ENCODE measurements at regions of chr3 and their contacts with region 1.

Region 1: DNA sequence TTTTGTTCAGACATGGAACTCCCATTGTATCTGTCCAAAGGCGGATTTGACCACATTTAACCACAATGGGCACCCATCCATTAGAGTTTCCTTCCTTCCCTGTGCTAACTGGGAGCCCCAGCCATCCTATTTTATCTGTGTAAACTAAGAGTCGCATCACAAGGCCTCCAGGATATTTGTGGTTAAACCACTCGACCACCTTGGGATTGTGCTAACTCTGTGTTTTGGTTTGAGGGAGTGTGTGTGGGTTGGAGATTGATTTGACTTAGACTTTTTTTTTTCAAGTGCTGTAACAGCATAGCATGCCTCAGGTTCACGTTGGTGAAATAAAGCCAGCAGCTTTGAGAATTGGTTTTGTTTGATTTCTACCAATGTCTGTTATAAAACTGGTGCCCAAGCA is 100.4 kb upstream of the TP63 start:
- DNase-seq: no peak
- H3K4me3 Mint-ChIP-seq: peak overlapping the region; percentile 41
- H3K27ac Mint-ChIP-seq: peak overlapping the region; percentile 87
- H3K4me1 Mint-ChIP-seq: peaks cover 33% of the 10 kb centered on the region
- H3K27me3 Mint-ChIP-seq: no peaks in the 10 kb centered on the region

Region 2: DNA sequence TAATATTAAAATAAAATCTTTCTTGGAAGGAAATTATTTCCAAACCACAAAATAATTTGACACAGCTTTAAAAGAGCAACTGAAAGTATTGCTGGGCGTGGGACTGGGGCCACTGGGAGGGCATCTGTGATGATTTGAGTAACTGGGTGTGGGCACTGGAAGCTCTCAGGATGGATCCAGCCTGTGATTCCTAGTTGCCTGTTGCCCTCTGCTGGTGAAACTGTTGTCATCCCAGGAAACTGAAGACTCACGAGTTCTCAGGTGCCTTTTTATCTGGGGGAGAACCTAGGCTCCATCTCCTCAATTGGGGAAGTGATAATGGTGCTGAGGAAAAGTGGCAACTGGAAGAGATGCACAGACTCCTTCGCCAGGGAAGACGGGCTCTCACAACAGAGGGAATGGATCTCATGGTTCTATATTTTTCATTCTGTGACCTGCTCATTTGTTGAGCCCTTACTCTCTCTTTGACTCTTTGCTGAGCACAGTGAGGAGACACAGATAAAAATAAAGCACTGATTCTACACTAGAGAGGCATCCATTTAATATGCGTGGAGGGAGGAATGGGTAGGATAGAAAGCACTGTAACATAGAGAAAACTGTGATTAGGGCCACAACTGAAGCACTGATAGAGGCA is 297.5 kb before region 1 on chr3:
- intact Hi-C with region 1: loop called (anchors 1 kb)
- DNase-seq: no peak
- H3K4me3 Mint-ChIP-seq: no peak overlapping the region
- H3K27ac Mint-ChIP-seq: no peak overlapping the region
- H3K4me1 Mint-ChIP-seq: peaks cover 48% of the 10 kb centered on the region
- H3K27me3 Mint-ChIP-seq: peaks cover 18% of the 10 kb centered on the region

Region 3: GRCh38 chr3:189404797-189405484 is 125.9 kb before region 1 on chr3:
- intact Hi-C with region 1: loop called (anchors 1 kb)
- DNase-seq: no peak
- H3K4me3 Mint-ChIP-seq: no peak overlapping the region
- H3K27ac Mint-ChIP-seq: no peak overlapping the region
- H3K4me1 Mint-ChIP-seq: peaks cover 11% of the 10 kb centered on the region
- H3K27me3 Mint-ChIP-seq: no peaks in the 10 kb centered on the region

Region 4: DNA sequence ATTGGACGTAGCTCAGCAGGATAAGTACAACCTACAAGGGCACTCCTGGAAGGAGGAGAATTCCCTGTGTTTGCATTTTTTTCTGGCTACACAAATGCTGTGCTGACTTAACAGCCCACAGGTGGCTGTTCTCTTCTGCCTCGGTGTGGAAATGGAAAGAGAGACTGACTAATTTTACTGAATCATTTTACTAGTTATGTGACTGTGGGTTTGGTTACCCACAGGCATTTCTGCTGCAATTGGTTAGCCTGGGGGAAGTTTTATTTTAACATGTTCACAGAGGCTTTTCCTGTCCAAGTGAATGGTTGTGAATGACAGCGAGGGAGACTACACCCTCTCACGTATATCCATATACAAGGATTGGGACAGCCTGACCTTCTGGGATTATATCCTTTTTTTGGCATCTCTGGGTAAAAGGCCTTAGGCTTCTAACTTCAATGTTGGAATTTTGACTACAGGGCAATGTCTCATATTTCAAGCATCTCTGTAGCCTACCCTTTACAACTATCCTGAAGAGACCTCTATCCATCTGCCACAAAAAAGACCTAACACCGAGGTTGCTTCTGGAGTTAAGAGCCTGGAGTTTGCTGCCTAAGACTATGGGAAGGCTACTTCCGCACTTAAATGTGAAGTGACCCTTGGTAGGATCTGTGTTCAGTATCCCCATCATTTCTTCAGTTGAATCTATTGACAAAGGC is 33.2 kb after region 1 on chr3:
- intact Hi-C with region 1: loop called (anchors 1 kb)
- DNase-seq: peak; percentile 54
- H3K4me3 Mint-ChIP-seq: peak overlapping the region; percentile 0
- H3K27ac Mint-ChIP-seq: peak overlapping the region; percentile 19
- H3K4me1 Mint-ChIP-seq: peaks cover 55% of the 10 kb centered on the region
- H3K27me3 Mint-ChIP-seq: no peaks in the 10 kb centered on the region

Region 5: GRCh38 chr3:189621948-189622603 is 91.3 kb after region 1 on chr3:
- intact Hi-C with region 1: loop called (anchors 1 kb)
- DNase-seq: no peak
- H3K4me3 Mint-ChIP-seq: peak overlapping the region; percentile 37
- H3K27ac Mint-ChIP-seq: peak overlapping the region; percentile 90
- H3K4me1 Mint-ChIP-seq: peaks cover 47% of the 10 kb centered on the region
- H3K27me3 Mint-ChIP-seq: no peaks in the 10 kb centered on the region

Region 6: DNA sequence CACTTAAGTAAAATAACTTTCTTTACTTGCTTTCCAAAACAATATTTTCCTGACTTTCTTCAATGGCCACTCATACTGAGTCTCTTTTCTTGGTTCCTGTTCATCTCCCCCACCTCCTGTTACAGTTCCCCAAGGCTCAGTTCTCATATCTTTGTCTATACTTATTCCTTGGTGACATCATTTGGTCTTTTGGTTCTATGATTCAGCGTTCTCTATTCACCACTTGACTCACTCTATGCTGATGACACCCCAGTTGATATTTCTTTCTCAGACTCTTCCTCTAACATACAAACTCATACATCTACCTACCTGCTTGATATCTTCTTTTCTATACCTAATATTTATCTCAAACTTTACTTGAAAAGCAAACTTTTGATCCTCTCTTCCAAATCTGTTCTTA is 674.9 kb after region 1 on chr3:
- intact Hi-C with region 1: loop called (anchors 10 kb)
- DNase-seq: no peak
- H3K4me3 Mint-ChIP-seq: no peak overlapping the region
- H3K27ac Mint-ChIP-seq: peak overlapping the region; percentile 31
- H3K4me1 Mint-ChIP-seq: peaks cover 11% of the 10 kb centered on the region
- H3K27me3 Mint-ChIP-seq: peaks cover 9% of the 10 kb centered on the region

Measured in activated T-helper 2 cell treated with anti-CD3 and anti-CD28 coated beads, Interferon-gamma antibody, Interleukin-2, Interleukin-4, amounts not matched to agents 10 μg/mL and 5 μg/mL and 100 μg/mL, durations not matched to agents 14 hours and 24 hours and 36 hours (primary cell).